Activated T-helper 1 cell treated with anti-CD3 and anti-CD28 coated beads, Interleukin-12 subunit alpha, Interleukin-12 subunit beta, Interleukin-2, Interleukin-4 antibody, amounts not matched to agents 30 ng/mL and 10 ng/mL and 1 ng/mL, durations not matched to agents 14 hours and 24 hours and 36 hours (primary cell): ENCODE measurements at regions of chr4 and their contacts with region 1.

Region 1: GRCh38 chr4:22515145-22515887 is 550 bp downstream of the ADGRA3 start:
- DNase-seq: peak; percentile 12
- H3K4me3 Mint-ChIP-seq: peak overlapping the region; percentile 96
- H3K27ac Mint-ChIP-seq: peak overlapping the region; percentile 92
- H3K4me1 Mint-ChIP-seq: peaks cover 23% of the 10 kb centered on the region
- H3K27me3 Mint-ChIP-seq: peaks cover 4% of the 10 kb centered on the region

Region 2: GRCh38 chr4:22410645-22411247 is 104.6 kb before region 1 on chr4:
- intact Hi-C with region 1: loop called (anchors 10 kb)
- DNase-seq: no peak
- H3K4me3 Mint-ChIP-seq: no peak overlapping the region
- H3K27ac Mint-ChIP-seq: no peak overlapping the region
- H3K4me1 Mint-ChIP-seq: no peaks in the 10 kb centered on the region
- H3K27me3 Mint-ChIP-seq: no peaks in the 10 kb centered on the region

Region 3: GRCh38 chr4:22483551-22483981 is 31.8 kb before region 1 on chr4:
- intact Hi-C with region 1: loop called (anchors 5 kb)
- DNase-seq: no peak
- H3K4me3 Mint-ChIP-seq: no peak overlapping the region
- H3K27ac Mint-ChIP-seq: peak overlapping the region; percentile 4
- H3K4me1 Mint-ChIP-seq: peaks cover 15% of the 10 kb centered on the region
- H3K27me3 Mint-ChIP-seq: no peaks in the 10 kb centered on the region

Region 4: DNA sequence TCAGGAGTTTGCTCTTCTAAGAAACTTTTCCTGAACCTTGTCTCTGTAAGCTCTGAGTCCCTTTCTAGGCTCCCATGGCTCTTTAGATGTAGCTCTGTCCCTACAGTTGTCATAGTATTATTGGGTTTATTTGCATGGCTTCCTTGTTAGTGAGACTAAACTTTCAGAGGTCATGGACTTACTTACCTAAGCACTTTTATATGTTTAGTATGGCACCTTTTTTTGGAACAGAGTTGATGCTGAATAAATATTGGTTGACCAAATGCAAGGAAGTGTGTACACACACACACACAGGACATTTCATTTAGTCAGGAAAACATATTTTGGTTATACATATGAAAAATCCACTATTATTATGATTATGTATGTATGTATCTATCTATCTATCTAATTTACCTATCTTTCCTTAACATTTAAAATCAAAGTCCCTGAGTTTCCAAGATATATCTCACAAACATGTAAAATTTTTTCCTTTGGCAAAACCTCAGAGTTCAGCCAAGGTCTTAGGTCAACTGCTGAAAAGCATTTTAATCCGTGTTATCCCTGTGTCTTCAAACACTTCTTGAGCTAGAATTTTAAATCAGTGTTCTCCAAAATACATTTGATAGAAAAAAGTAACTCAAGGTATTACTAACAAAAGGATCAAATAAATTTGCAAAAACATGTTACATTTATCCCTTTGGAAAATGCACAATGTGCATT is 130.3 kb after region 1 on chr4:
- intact Hi-C with region 1: no loop called
- DNase-seq: no peak
- H3K4me3 Mint-ChIP-seq: no peak overlapping the region
- H3K27ac Mint-ChIP-seq: no peak overlapping the region
- H3K4me1 Mint-ChIP-seq: no peaks in the 10 kb centered on the region
- H3K27me3 Mint-ChIP-seq: no peaks in the 10 kb centered on the region

Region 5: DNA sequence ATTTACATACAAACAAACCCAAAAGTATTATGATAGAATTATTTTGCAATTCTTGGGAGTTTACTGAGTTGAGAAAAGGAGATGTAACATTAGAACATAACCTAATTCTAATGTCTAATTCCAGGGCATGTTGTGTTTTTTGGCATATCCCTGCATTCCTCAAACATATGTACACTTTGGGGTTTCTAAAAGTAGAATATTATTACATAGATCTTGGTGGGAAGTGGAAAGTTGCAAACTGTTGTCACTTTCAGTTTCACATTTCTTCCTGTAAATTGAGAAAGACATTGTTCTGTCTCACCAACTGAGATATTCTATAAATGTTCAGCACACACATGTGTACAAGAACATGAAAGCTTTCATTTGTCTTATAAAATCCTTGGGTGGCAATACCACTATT is 153.0 kb after region 1 on chr4:
- intact Hi-C with region 1: loop called (anchors 5 kb)
- DNase-seq: no peak
- H3K4me3 Mint-ChIP-seq: no peak overlapping the region
- H3K27ac Mint-ChIP-seq: no peak overlapping the region
- H3K4me1 Mint-ChIP-seq: peaks cover 34% of the 10 kb centered on the region
- H3K27me3 Mint-ChIP-seq: peaks cover 2% of the 10 kb centered on the region

Region 6: GRCh38 chr4:23333946-23334878 is 818.9 kb after region 1 on chr4:
- intact Hi-C with region 1: loop called (anchors 10 kb)
- DNase-seq: peak; percentile 53
- H3K4me3 Mint-ChIP-seq: peak overlapping the region; percentile 65
- H3K27ac Mint-ChIP-seq: peak overlapping the region; percentile 87
- H3K4me1 Mint-ChIP-seq: peaks cover 32% of the 10 kb centered on the region
- H3K27me3 Mint-ChIP-seq: no peaks in the 10 kb centered on the region